Endothelial cell of umbilical vein (primary cell): ENCODE measurements at regions of chr10 and their contacts with region 1.

Region 1: DNA sequence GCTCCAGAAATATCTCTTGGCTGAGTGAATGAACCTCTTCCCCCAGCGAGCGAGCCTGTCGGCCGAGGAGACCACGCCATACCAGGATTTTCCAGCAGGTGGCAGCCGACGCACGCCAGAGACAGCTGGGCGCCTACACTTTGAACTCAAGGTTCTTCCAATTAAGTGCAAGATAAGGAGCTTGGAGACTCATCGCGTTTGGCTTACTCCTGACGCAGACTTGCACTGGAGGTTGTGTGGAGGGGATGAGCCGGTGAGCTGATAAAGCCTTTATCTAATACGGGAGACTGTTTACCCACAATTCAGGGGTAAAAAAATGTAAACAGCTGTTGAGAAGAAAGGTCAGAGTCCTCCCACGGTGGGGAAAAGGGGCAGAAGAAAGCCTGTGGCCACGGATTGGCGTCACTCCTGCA is 45.9 kb upstream of the EMX2 start:
- DNase-seq: peak; percentile 85
- H3K4me3 ChIP-seq: no peak overlapping the region
- H3K27ac ChIP-seq: no peak overlapping the region
- H3K4me1 ChIP-seq: no peaks in the 10 kb centered on the region
- H3K27me3 ChIP-seq: peaks cover 13% of the 10 kb centered on the region in 2 experiments
- CTCF ChIP-seq: peak; percentile 93
- POLR2A ChIP-seq: no peak

Region 2: DNA sequence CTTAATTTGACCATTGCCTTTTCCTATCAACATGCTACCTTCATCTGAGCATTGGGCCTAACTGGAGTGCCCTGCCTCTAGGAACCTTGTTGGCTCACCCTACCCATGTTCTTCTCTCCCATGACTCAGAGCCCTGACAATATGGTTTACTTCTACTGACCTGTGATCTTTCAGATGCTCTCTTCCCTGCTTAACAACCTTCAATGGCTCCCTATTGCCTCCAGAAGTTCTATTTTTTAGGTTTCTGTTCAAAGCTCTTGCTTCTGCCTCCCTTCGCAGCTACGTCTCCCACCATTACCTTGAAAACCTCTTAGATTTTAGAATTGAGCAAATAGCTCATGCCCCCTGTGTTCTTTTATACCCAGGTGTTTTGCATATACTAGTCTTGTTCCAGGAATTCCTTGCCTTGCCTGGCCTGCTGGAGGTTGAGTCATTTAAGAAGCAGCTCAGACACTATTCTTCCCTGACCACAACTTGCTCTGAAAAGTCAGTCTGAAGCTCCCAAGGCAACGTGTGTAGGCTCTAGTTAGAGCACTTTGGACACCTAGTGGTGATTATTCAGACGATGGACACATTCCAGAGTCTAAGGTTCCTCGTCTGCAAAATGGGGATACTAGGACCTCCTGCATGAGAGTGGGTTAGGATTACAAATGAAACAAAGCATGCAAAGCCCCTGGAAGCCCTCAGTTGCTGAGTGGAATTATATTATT is 18.5 kb before region 1 on chr10:
- CTCF ChIA-PET with region 1: interaction called, 12 read pairs
- POLR2A ChIA-PET with region 1: no interaction called
- dilution Hi-C with region 1: no loop called
- intact Hi-C with region 1: no loop called
- DNase-seq: peak; percentile 44
- H3K4me3 ChIP-seq: no peak overlapping the region
- H3K27ac ChIP-seq: no peak overlapping the region
- H3K4me1 ChIP-seq: no peaks in the 10 kb centered on the region
- H3K27me3 ChIP-seq: peaks cover 2 to 6% of the 10 kb centered on the region in 2 experiments
- CTCF ChIP-seq: peak in 1 of 2 donors; percentile 18
- POLR2A ChIP-seq: no peak

Region 3: DNA sequence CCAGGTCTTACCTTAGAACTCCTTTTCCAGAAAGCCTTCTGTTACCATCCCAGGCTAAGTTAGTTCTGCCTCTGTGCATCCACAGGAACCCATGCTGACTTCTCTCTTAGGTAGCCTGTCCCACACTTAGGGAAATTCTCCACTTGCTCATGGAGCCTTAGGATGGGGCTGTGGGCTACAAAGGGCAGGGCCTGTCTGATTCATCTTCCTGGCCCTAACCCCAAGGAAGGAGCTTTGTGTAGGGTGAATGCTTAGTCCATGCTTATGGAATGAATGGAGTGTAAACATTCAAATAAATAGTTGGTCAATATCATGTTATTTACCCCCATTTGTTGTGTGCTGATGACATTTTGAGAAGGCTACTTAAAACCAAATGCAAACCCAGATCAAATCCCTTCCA is 100.6 kb after region 1 on chr10:
- CTCF ChIA-PET with region 1: no interaction called
- POLR2A ChIA-PET with region 1: no interaction called
- dilution Hi-C with region 1: no loop called
- intact Hi-C with region 1: no loop called
- DNase-seq: no peak
- H3K4me3 ChIP-seq: no peak overlapping the region
- H3K27ac ChIP-seq: no peak overlapping the region
- H3K4me1 ChIP-seq: no peaks in the 10 kb centered on the region
- H3K27me3 ChIP-seq: no peaks in the 10 kb centered on the region
- CTCF ChIP-seq: no peak
- POLR2A ChIP-seq: no peak

Region 4: DNA sequence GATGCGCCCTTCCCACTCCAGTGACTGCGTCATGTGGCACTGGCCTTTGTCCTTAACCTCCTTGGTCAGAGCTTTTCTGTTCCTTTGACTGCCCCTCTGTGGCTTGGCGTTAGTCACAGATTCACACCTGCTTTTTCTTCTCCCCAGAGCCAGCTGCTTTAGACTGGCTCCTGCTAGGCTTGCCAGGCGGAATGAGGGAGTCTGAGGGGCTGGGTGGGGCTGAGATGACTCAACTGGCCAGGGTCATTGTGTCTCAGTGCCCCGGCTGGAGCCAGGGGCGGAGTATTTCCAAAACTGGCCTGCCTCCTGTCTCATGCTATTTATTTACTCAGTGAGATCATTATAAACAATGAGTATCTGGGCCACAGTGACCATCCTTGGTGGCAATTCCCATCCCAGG is 240.1 kb after region 1 on chr10:
- CTCF ChIA-PET with region 1: no interaction called
- POLR2A ChIA-PET with region 1: no interaction called
- dilution Hi-C with region 1: no loop called
- intact Hi-C with region 1: loop called (anchors 10 kb)
- DNase-seq: no peak
- H3K4me3 ChIP-seq: no peak overlapping the region
- H3K27ac ChIP-seq: no peak overlapping the region
- H3K4me1 ChIP-seq: no peaks in the 10 kb centered on the region
- H3K27me3 ChIP-seq: peaks cover 10% of the 10 kb centered on the region in 2 experiments
- CTCF ChIP-seq: no peak
- POLR2A ChIP-seq: no peak

Region 5: DNA sequence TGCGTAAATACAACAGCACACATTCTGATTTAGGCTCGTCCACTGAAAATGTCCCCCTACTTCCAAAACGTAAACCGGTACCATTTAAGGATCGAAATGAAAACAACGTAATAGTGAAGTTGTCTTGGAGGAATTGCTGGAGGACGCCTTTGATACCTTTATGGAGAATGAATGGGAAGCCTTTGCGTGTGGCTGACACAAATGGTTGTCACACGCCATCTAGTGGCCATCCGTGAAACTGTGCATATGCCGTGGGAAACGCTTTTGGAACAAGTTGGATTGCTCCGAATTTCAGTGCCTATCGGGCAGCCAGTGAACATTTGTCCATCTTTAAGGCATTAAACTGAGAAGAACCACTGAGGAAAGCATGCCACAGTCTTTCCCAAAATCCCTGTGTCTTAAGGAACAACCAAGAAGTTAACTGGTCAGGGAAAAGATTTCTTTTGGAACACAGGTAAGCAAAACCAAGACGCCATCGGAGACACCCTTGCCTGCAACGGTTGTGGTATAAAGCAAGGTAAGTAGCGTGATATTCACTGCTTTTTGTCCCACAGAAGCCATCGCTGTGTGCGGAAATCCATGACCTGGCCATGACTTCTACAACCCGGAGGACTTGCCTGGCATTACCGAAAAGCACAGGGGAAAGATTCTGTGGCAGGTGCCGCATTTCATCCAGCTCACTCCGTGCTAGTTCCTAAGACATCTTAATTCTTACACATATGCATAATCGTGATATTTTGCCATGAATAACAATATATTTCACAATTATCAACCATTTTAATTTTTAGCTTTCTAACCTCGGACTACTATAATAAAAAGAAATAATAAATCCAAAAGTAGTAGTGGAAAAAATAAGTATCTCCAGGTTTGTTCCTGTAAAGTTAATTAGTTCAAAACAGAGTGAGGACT is 744.9 kb after region 1 on chr10:
- CTCF ChIA-PET with region 1: interaction called, 133 read pairs
- POLR2A ChIA-PET with region 1: no interaction called
- dilution Hi-C with region 1: no loop called
- intact Hi-C with region 1: loop called (anchors 1 kb)
- DNase-seq: peak; percentile 74
- H3K4me3 ChIP-seq: no peak overlapping the region
- H3K27ac ChIP-seq: no peak overlapping the region
- H3K4me1 ChIP-seq: no peaks in the 10 kb centered on the region
- H3K27me3 ChIP-seq: peaks cover 7 to 12% of the 10 kb centered on the region in 2 experiments
- CTCF ChIP-seq: peak; percentile 81 to 88
- POLR2A ChIP-seq: no peak

Region 6: DNA sequence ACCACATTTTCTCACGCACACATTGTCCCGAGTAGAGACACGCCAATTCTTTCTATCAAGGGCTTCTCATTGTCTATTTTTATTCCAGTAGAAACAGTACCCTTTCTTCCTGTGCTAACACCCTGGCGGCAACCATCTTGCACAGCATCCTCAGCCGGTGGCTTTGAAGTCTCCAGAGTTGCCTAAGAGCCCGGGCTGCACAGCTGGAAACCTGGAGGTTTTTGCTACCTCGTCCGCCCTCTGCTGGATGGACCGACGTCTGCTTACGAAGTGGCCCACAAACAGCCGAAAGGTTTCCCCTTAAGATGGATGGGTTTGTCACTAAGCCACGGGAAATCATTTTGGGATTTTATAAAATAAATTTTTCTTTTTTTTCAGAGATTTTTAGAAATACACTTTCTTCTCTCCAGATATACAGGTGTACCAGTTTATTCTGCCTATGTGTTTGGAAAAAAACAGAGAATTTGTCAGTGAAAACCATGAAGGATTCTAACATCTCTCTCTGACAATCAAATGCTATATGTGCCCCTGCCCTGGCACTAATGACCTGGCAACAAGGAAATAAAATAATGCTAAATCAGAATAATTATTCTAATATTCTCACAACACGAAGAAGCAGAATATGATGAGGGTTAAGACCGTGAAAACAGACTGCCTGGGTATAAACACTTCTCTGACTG is 927.3 kb after region 1 on chr10:
- CTCF ChIA-PET with region 1: interaction called, 59 read pairs
- POLR2A ChIA-PET with region 1: no interaction called
- dilution Hi-C with region 1: no loop called
- intact Hi-C with region 1: loop called (anchors 1 kb)
- DNase-seq: peak; percentile 75
- H3K4me3 ChIP-seq: no peak overlapping the region
- H3K27ac ChIP-seq: no peak overlapping the region
- H3K4me1 ChIP-seq: no peaks in the 10 kb centered on the region
- H3K27me3 ChIP-seq: no peaks in the 10 kb centered on the region
- CTCF ChIP-seq: peak; percentile 62 to 78
- POLR2A ChIP-seq: no peak

Region 7: GRCh38 chr10:118543714-118544400 is 1047.2 kb after region 1 on chr10:
- CTCF ChIA-PET with region 1: interaction called, 8 read pairs
- POLR2A ChIA-PET with region 1: no interaction called
- dilution Hi-C with region 1: no loop called
- intact Hi-C with region 1: loop called (anchors 1 kb)
- DNase-seq: peak; percentile 11
- H3K4me3 ChIP-seq: no peak overlapping the region
- H3K27ac ChIP-seq: no peak overlapping the region
- H3K4me1 ChIP-seq: no peaks in the 10 kb centered on the region
- H3K27me3 ChIP-seq: no peaks in the 10 kb centered on the region
- CTCF ChIP-seq: peak; percentile 26 to 56
- POLR2A ChIP-seq: no peak